ENCODE measurements at regions of chr2 and their contacts with region 1.

Region 1: DNA sequence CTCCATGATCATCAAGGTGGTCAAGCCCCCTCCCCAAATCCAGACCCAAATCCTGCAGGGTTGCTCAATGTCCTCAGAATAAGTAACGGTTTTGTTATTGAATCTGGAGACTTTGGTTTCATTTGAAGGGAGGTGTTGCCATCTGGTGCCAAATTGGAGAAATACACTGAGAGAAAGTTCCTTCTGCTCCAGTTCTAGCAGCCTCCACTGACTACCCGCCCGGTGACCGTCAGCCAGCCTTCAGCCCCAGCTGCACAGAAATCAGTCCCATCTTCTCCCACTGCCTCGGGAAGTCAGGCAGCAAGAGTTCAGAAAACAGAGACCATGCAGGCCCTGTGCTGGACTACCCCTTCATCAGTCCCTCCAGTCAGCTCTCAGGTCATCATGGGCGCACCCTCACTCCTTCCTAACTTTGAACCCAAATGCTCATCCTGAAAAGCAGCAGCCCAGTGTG is 38.7 kb downstream of the PKDCC start:
- DNase-seq: peak; percentile 71 to 80
- ATAC-seq: peak; percentile 69 to 84
- H3K4me3 ChIP-seq: no peak overlapping the region
- H3K27ac ChIP-seq: peak overlapping the region; percentile 73 to 80
- H3K4me1 ChIP-seq: peaks cover 48% of the 10 kb centered on the region
- CTCF ChIP-seq: peak; percentile 98
- EP300 ChIP-seq: no peak
- POLR2A ChIP-seq: no peak
- RAD21 ChIP-seq: peak; percentile 99 to 100

Region 2: DNA sequence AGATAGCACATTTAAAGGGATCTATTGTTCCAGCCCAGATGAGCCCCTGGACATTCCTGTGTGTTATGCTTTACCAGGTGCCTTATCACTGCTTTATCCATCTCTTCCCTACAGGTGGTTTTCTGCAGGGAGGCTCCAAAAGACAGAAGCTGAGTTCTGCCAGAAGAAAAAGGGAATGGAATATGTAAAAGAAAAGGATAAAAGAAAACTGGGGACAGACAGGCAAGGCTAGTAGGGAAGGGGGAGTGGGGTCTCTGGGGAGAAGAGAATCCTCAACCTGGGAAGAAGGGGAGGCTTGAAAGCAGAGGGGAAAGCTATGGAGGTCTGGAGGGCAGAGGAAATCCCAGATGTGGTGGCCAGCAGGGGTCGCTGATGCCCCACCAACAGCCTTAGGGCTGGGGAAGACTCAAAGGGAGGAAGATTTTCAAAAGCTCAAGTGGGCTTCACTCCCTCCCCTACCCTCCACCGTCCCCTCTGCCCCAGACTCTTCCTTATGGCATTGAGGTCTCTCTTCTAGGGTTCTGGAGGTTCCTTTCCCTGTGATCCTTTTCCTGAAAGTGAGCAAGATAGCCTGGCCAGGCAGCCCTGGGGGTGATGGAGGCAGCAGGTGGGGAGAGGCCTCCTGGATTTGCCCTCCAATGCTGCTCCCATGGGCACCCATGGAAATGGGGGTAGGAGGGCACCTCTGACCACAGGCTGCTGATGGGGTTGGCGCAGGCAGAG is 216.8 kb before region 1 on chr2:
- CTCF ChIA-PET with region 1: interaction called, 761 read pairs
- POLR2A ChIA-PET with region 1: no interaction called
- DNase-seq: peak; percentile 75 to 76
- ATAC-seq: peak; percentile 89 to 96
- H3K4me3 ChIP-seq: no peak overlapping the region
- H3K27ac ChIP-seq: peak overlapping the region; percentile 73 to 85
- H3K4me1 ChIP-seq: peaks cover 62% of the 10 kb centered on the region
- CTCF ChIP-seq: peak; percentile 96
- EP300 ChIP-seq: no peak
- POLR2A ChIP-seq: no peak
- RAD21 ChIP-seq: peak; percentile 99 to 100

Region 3: GRCh38 chr2:41896186-41896846 is 190.2 kb before region 1 on chr2:
- CTCF ChIA-PET with region 1: interaction called, 23 read pairs
- POLR2A ChIA-PET with region 1: no interaction called
- DNase-seq: no peak
- ATAC-seq: no peak
- H3K4me3 ChIP-seq: no peak overlapping the region
- H3K27ac ChIP-seq: 0 out of 6 replicates have a peak overlapping the region, but pooled peaks of 1 of the 2 experiments have one; percentile 8
- H3K4me1 ChIP-seq: peaks cover 10% of the 10 kb centered on the region; the same call in 1 of the 3 replicates
- CTCF ChIP-seq: no peak
- EP300 ChIP-seq: no peak
- POLR2A ChIP-seq: no peak
- RAD21 ChIP-seq: no peak

Region 4: GRCh38 chr2:42047488-42048298 is 38.8 kb before region 1 on chr2 and contains the start of gene PKDCC:
- CTCF ChIA-PET with region 1: interaction called, 40 read pairs
- POLR2A ChIA-PET with region 1: interaction called, 3 read pairs
- DNase-seq: peak; percentile 84 to 91
- ATAC-seq: peak; percentile 76 to 83
- H3K4me3 ChIP-seq: peak within 1 kb of the TSS; percentile 63
- H3K27ac ChIP-seq: peak within 1 kb of the TSS; percentile 79 to 96
- H3K4me1 ChIP-seq: peaks cover 52% of the 10 kb centered on the region
- CTCF ChIP-seq: no peak
- EP300 ChIP-seq: no peak
- POLR2A ChIP-seq: peak; percentile 41; the same call in 1 of the 2 replicates
- RAD21 ChIP-seq: 0 out of 5 replicates have a peak, but pooled peaks have one; percentile 5 to 23
- polyA plus RNA-seq, gene PKDCC: 30.0 and 42.9 TPM in 2 replicates

Region 5: DNA sequence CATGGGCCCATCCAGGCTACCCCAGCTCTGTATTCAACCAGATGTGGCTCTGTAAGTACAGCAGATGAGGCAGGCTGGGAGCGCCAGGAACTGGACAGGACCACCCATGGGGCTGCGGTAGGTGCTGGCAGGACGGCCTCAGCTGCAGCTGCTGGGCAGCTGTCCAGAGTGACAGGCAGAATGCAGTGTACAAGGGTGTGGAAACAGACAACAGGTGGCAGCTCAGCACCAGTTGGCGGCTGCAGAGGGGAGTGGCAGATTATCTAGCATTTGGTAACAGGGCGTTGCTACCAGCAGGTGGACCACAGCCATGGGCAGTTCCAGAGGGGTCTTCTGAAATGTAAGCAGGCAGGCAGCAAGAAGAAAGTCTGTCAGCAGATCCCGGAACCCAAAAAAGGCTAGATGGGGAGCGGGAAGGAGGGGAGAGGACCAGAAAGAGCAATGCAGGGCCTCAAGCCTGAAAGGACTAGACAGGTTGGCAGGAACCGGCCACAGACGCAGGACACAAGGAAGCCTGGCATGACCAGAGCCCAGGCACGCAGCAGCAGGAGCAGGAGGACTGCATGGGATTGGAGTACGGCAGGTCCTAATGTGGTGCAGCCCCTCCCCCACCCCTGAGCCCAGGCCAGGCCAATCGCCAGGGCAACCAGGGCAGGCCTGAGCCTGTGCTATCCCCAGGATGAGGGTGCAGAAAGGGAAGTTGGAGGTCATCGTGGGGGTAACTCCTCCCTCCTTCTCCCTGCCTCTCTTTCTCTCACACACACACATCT is 14.0 kb before region 1 on chr2:
- CTCF ChIA-PET with region 1: interaction called, 146 read pairs
- POLR2A ChIA-PET with region 1: no interaction called
- DNase-seq: no peak
- ATAC-seq: peak; percentile 36 to 56; a peak in 4 of 6 replicates
- H3K4me3 ChIP-seq: no peak overlapping the region
- H3K27ac ChIP-seq: peak overlapping the region in 1 of 2 experiments; percentile 9; a peak in 4 of 6 replicates
- H3K4me1 ChIP-seq: peaks cover 17% of the 10 kb centered on the region; the same call in 2 of the 3 replicates
- CTCF ChIP-seq: no peak
- EP300 ChIP-seq: no peak
- POLR2A ChIP-seq: no peak
- RAD21 ChIP-seq: peak in 1 of 2 experiments; percentile 25; a peak in 1 of 5 replicates

Region 6: DNA sequence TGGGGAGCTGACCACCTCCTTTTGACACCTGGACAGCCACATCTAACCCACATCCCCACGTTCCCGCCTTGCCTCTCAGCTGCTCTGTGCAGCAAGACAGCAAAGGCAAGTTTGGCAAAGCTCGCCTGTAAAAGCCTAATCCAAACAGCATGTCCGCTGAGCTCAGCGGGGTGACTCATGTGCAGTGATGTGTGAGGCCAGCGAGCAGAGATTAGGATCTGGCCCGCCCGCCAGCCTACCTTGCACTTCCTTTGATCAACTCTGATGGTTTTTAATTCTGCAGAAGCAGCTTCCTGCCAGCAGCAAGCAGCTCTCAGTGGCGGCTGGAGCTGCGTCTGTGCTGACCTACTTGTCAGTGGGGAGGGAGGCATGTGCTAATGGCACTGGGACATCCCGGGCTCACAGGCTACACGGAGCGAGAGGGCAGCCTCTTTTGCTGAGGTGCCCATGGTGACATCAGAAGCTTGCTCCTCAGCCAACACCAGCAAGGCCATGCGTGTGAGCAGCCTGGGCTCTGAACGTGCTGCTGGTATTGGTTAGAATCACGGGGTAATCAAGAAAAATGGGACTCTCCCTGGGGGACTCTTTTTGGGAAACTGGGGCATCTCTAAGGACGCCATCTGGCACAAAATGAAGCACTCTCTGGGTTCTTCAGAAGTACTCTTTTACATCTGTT is 46.6 kb after region 1 on chr2:
- CTCF ChIA-PET with region 1: interaction called, 15 read pairs
- POLR2A ChIA-PET with region 1: no interaction called
- DNase-seq: peak; percentile 89 to 94
- ATAC-seq: peak; percentile 91 to 93
- H3K4me3 ChIP-seq: peak overlapping the region; percentile 18; the same call in 1 of the 3 replicates
- H3K27ac ChIP-seq: peak overlapping the region; percentile 75 to 87
- H3K4me1 ChIP-seq: peaks cover 72% of the 10 kb centered on the region
- CTCF ChIP-seq: no peak
- EP300 ChIP-seq: peak; percentile 72 to 80; a peak in 3 of 5 replicates
- POLR2A ChIP-seq: no peak
- RAD21 ChIP-seq: peak in 1 of 2 experiments; percentile 41; a peak in 4 of 5 replicates

Region 7: GRCh38 chr2:42328148-42328833 is 241.8 kb after region 1 on chr2:
- CTCF ChIA-PET with region 1: interaction called, 131 read pairs
- POLR2A ChIA-PET with region 1: no interaction called
- DNase-seq: peak; percentile 36 to 49
- ATAC-seq: peak; percentile 65 to 81; a peak in 4 of 6 replicates
- H3K4me3 ChIP-seq: no peak overlapping the region
- H3K27ac ChIP-seq: no peak overlapping the region
- H3K4me1 ChIP-seq: peaks cover 18% of the 10 kb centered on the region
- CTCF ChIP-seq: peak; percentile 83
- EP300 ChIP-seq: no peak
- POLR2A ChIP-seq: no peak
- RAD21 ChIP-seq: peak; percentile 77 to 84

Region 8: GRCh38 chr2:42390401-42390969 is 304.0 kb after region 1 on chr2:
- CTCF ChIA-PET with region 1: no interaction called
- POLR2A ChIA-PET with region 1: no interaction called
- DNase-seq: no peak
- ATAC-seq: no peak
- H3K4me3 ChIP-seq: no peak overlapping the region
- H3K27ac ChIP-seq: no peak overlapping the region
- H3K4me1 ChIP-seq: no peaks in the 10 kb centered on the region
- CTCF ChIP-seq: no peak
- EP300 ChIP-seq: no peak
- POLR2A ChIP-seq: no peak
- RAD21 ChIP-seq: no peak

Measured in A549 (cell line).